Activated T-helper 1 cell treated with anti-CD3 and anti-CD28 coated beads, Interleukin-12 subunit alpha, Interleukin-12 subunit beta, Interleukin-2, Interleukin-4 antibody, amounts not matched to agents 30 ng/mL and 10 ng/mL and 1 ng/mL, durations not matched to agents 14 hours and 24 hours and 36 hours (primary cell): ENCODE measurements at regions of chr10 and their contacts with region 1.

Region 1: DNA sequence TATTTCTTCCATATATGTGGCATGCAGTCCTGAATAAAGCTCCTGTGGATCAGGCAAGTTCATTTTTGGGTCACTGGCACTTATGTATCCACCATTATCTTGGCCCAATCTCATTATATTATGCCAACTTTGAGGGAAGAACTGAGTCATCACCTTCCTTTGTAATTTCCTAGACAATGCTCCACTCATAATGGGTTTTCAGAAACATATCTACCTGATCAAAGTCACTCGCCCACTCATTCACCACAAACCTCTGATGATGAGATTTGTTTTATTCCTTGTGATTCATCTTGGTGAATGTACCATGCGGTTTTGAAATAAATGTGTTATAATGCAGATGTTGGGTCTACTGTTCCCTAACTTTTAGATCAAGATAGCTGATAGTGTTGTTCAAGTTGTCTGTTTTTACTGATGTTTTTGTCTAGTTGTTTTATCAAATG is 525.8 kb downstream of the KIF20B start:
- DNase-seq: no peak
- H3K4me3 Mint-ChIP-seq: no peak overlapping the region
- H3K27ac Mint-ChIP-seq: peak overlapping the region; percentile 63
- H3K4me1 Mint-ChIP-seq: peaks cover 6% of the 10 kb centered on the region
- H3K27me3 Mint-ChIP-seq: peaks cover 8% of the 10 kb centered on the region

Region 2: DNA sequence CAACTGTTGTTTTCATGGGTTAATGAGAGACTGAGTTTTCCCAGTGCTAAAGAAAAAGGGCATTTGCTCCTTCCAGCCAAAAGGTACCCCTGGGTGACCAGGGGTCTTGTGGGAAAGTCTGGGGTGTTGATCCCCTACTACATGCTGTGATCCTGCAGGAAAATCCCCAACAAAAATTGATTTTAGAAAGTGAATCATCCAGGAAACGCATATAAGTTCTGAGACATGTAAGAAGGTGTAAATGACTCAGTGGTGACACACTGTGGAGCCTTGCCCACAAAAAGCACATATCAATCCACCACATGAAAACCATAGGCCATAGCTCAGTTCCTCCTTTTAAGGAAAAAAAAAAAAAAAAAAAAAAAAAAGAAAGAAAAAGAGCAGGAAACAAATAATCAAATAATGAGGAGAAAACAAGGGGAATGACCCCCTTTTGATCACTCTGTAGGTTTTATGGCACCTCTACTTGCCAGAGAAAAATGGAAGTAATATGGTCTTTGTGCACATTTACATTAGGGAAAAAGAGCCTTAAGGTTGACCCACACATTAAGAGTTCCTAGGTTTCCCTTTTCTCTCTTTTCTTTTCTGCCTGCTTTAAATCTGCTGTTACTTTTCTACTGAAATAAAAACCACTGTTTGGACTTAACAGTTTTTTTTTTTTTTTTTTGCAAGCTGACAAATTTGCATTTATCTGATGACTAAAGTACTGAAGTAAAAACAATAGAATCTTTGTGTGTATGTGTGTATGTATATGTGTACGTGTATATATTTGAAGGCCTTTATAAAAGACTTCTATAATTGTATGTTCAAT is 139.8 kb before region 1 on chr10:
- intact Hi-C with region 1: loop called (anchors 2 kb)
- DNase-seq: no peak
- H3K4me3 Mint-ChIP-seq: no peak overlapping the region
- H3K27ac Mint-ChIP-seq: no peak overlapping the region
- H3K4me1 Mint-ChIP-seq: peaks cover 7% of the 10 kb centered on the region
- H3K27me3 Mint-ChIP-seq: peaks cover under 1% of the 10 kb centered on the region